Cardiac septum (tissue), 1 donor: ENCODE measurements at regions of chr10 and their contacts with region 1.

Region 1: DNA sequence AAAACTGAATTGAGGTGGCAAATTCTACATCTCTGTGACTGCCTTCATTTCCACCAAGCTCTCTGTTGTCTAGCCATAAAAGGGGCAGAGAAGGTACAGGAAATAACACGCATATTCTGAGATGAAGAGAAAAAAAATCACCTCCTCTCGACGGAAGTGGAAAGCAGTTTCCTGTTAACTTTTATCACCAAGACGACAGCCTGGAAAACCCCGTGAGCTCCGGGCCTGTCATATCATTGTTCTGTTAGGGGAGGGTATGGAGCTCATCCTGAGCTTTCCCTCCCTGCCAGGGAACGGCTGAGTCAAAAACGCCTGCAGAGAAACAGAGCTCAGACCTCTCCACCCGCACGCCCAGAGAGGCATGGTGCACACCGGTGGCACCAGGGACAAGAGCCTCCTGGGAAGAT is 200.3 kb downstream of the PRPF18 start:
- DNase-seq: no peak

Region 2: GRCh38 chr10:13891128-13892000 is 104.3 kb after region 1 on chr10:
- intact Hi-C with region 1: loop called (anchors 5 kb)
- DNase-seq: no peak

Region 3: DNA sequence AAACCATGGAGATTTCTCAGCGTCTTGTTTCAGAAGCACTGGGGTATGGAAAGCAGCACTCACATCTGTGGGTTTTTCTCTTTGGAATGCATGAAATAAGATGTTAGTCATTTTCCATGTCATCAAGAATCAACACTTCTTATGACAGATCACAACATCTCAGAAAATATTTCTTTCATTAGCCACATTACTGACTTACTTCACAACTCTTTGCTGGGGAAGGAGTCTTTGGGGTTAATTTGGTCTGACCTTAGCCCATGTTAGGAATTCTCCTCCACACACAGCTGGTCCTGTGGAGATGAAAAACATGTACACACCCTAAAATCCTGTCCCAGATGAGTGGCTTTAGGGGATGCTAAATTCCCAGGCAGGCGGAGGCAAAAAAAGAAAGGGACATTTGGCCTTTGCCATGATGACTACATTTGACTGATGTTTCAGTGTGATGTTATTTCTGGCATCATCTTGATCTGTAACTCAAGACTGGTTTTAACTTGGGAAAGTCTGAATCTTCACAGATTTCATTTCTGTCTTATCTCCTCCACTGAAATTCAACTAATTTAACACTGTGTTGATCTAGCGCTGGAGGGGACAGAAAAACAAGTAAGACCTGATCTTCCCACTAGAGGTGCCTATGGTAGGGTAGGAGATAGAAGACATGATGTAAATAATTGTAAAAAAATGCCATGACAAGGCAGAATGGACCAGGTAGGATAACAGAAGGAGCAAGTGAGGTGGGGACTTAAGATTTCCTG is 163.0 kb after region 1 on chr10:
- intact Hi-C with region 1: loop called (anchors 5 kb)
- DNase-seq: no peak

Region 4: DNA sequence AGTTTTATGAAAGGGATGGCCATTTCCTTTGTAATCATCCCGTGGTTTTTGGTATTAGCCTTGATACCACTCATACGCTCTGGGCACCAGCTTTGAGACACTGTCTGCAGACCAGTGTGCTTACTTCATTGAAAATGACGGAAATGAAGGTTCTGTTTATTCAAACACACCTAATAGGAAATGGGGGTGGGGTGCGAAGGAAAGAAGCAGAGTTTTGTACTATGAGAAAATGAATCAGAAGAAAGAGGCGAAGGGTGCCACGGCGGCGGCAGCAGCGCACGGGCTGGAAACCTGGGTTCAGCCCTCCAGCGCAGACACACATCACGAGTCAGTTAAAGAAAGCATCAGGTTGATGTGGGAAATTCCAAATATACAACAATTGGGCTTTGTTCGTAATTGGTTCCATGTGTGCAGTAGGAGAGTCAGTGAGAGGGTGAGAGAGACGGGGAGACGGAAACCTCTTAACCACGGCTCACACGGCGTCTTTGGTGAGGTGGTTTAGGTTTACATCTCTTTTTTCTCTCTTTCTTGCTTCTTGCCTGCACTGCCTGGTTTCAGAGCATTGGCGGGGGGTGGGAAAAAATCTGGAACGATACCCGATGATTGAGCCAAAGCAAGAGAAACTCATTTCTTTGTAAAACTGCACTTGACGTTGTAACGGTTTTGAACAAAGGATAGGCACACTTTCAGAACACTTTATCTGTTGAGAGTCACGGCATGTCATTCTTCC is 222.5 kb after region 1 on chr10:
- intact Hi-C with region 1: loop called (anchors 10 kb)
- DNase-seq: no peak

Region 5: GRCh38 chr10:14093730-14094484 is 306.9 kb after region 1 on chr10:
- intact Hi-C with region 1: loop called (anchors 1 kb)
- DNase-seq: no peak

Region 6: DNA sequence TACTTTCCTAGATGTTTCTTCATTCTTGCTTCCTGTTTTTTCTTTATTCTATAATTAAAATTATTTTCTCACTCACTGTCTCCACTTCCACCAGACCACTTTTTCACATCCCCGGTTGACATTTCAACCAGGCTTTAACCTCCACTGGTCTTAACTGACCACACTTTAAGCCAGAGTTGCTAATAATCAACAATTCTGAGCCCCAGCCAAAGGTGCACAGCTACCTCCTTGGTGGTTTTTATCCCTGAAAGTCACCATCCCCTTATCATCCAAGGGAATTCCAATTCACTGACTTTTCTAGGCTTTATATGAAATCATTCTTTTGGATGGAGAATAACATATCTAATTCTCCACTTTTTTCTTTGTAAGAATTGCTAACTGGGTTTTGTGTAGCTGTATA is 404.9 kb after region 1 on chr10:
- intact Hi-C with region 1: loop called (anchors 10 kb)
- DNase-seq: no peak

Region 7: GRCh38 chr10:14478604-14479003 is 691.6 kb after region 1 on chr10:
- intact Hi-C with region 1: loop called (anchors 5 kb)
- DNase-seq: no peak